Activated T-helper 2 cell treated with anti-CD3 and anti-CD28 coated beads, Interferon-gamma antibody, Interleukin-2, Interleukin-4, amounts not matched to agents 10 μg/mL and 5 μg/mL and 100 μg/mL, durations not matched to agents 14 hours and 24 hours and 36 hours (primary cell): ENCODE measurements at regions of chr2 and their contacts with region 1.

Region 1: DNA sequence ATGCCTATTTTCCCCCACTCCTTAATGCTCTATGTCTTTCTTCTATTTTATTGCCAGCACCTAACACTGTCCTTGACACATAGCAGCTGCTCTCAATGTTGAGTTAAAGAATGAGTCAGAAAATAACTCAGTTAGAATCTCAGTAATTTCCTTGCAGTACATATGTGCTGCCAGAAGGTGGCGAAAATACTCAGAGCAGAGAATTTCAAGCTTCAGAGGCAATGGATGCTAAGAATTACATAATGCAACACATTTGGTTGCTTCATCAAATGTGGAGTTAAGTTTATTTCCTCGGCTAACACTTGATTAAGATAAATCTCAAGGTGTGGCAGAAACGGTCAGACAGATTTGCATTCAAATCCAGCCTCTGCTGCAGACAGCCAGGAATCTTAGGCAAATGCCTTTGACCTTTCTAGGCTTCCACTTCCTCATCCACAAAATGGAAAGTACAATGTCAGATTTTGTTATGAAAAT is 105.6 kb downstream of the VSNL1 start:
- DNase-seq: peak; percentile 25
- H3K4me3 Mint-ChIP-seq: no peak overlapping the region
- H3K27ac Mint-ChIP-seq: no peak overlapping the region
- H3K4me1 Mint-ChIP-seq: peaks cover 4% of the 10 kb centered on the region
- H3K27me3 Mint-ChIP-seq: no peaks in the 10 kb centered on the region

Region 2: DNA sequence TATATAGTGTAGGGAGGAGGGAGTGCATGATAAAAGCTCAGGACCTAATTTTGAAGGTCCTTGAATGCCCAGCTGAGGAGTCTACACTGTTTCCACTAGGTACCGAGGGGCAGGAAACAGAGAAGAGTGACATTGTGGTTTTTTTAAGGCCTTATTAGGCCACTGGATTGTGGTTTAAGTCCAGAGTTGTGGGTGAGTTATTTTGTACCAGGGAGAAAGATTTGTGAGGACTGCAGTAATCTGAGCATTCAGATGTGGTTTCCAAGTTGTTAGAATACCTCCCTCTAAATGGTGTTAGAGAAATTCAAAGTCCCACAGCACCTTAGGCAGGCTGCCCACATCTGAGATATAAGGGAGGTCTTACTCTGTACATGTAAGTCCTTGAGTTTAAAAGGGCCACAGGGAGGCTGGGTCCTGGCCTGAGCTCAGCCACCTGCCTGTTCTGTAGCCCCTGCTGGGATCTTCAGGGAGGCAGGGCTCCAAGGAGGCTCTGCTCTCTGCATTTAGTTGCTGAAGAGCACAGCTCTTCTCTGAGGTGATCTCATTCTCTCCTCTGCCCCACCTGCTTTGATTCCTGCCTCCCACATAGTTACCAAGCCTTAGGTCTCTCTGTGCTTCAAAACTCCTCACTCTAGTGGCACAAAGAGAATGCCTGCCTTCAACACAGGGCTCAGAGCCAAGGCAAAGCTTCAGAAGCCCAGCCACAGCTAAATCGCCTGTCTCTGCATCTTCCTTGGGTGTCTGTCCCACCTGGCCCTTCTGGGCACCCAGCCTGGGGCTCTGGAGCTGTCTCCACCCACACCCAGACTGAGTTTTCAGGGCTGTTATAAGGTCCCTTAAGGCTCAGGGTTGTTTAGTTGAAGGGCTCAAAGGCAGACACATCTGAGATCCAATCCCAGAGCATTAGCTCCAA is 17.5 kb before region 1 on chr2:
- intact Hi-C with region 1: no loop called
- DNase-seq: no peak
- H3K4me3 Mint-ChIP-seq: no peak overlapping the region
- H3K27ac Mint-ChIP-seq: no peak overlapping the region
- H3K4me1 Mint-ChIP-seq: peaks cover 7% of the 10 kb centered on the region
- H3K27me3 Mint-ChIP-seq: no peaks in the 10 kb centered on the region

Region 3: GRCh38 chr2:17658251-17658843 is 12.2 kb after region 1 on chr2:
- intact Hi-C with region 1: loop called (anchors 1 kb)
- DNase-seq: no peak
- H3K4me3 Mint-ChIP-seq: no peak overlapping the region
- H3K27ac Mint-ChIP-seq: peak overlapping the region; percentile 7
- H3K4me1 Mint-ChIP-seq: peaks cover 16% of the 10 kb centered on the region
- H3K27me3 Mint-ChIP-seq: no peaks in the 10 kb centered on the region